ENCODE measurements at regions of chr19 and their contacts with region 1.

Region 1: DNA sequence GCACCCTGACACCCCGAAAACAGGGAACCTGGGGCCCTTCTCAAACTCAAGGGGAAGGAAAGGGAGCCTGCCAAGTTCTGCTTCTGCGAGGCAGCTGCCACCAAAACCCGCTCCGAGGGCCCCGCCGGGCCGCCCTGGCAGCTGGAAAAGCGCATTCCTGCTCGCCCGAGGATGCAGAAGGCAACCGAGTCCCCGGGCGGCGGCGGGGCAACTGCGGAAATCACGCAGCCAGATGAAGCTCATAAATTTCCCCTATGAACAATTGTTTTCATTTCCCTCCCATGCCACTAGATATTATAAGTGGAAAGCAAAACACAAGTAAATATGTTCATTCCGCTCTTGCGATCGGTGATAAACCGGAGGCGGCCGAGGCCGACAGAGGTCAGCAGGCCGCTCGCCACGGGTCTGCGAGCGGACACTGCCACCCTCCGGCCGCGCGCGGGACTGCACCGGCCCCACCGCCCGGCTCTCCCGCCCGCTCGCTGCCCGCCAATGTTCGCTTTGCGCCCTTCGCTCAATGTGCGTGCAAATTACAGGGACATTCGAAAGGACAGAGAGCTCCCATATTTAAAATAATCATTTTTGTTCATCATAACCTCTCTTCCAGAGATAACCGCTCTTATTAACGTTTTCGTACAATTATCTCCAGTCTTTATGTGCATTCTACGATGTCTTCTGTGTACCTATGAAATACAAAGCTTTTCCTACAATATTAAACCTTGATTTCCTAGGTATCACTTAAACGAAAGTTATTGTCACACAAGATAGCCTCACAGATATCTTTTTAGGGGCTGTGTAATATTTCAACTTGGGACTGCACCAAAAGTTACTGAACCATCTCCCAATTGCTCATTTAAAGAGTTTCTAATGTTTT is 120.8 kb upstream of the ZNF507 start:
- DNase-seq: peak; percentile 61
- H3K27ac ChIP-seq: no peak overlapping the region
- CTCF ChIP-seq: peak; percentile 99

Region 2: GRCh38 chr19:30682999-30683536 is 1541.5 kb before region 1 on chr19:
- CTCF ChIA-PET with region 1: interaction called, 14 read pairs
- POLR2A ChIA-PET with region 1: no interaction called
- DNase-seq: peak; percentile 84
- H3K27ac ChIP-seq: no peak overlapping the region
- CTCF ChIP-seq: peak; percentile 84